Panc1 (cell line): ENCODE measurements at regions of chr2 and their contacts with region 1.

Region 1: DNA sequence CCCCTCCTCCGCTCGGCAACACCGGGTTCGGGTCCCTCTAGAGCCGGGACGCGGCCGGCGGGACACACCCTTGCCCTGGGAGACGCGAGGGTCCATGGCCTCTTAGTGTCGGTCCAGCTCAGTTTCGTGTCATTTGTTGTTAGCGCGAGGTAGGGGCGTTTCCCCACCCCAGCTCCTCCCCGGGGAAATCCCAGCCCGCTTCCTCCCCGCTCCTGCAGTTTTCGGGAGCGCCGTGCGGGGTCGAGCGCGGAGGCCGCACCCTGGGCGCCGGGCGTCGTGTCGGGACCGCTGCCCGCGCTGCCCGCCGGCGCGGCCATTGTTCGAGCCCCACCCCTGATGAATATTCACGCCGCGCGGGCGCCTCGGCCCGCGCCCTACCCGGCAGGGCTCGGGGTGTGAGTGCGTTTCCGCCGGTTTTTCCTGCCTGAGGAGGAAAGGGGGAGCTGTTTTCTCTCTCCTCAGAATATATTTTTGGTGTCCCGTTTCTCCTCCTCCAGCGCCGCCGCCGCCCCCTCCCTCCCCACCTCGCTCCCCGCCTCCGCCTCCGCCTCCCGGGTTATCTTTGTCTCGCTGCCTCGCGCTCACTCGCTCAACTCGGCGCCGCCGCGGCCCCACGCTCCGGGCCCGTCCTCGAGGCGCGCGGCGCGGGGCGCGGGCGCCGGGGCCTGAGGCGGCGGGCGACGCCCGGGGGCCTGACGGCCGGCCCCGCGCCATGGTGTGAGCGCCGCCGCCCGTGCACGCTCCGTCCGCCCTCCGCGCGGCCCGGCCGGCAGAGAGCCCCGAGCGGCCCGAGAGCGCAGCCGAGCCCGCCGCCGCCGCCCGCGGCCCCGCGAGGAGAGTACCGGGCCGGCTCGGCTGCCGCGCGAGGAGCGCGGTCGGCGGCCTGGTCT is at the start of gene MAP4K4:
- DNase-seq: no peak
- ATAC-seq: peak; percentile 84
- H3K4me3 ChIP-seq: peak within 1 kb of the TSS; percentile 81 to 97
- H3K27ac ChIP-seq: peak within 1 kb of the TSS; percentile 89
- H3K4me1 ChIP-seq: peaks cover 3% of the 10 kb centered on the region
- H3K27me3 ChIP-seq: no peaks in the 10 kb centered on the region
- CTCF ChIP-seq: peak; percentile 61
- total RNA-seq, gene MAP4K4: 68.5 TPM

Region 2: DNA sequence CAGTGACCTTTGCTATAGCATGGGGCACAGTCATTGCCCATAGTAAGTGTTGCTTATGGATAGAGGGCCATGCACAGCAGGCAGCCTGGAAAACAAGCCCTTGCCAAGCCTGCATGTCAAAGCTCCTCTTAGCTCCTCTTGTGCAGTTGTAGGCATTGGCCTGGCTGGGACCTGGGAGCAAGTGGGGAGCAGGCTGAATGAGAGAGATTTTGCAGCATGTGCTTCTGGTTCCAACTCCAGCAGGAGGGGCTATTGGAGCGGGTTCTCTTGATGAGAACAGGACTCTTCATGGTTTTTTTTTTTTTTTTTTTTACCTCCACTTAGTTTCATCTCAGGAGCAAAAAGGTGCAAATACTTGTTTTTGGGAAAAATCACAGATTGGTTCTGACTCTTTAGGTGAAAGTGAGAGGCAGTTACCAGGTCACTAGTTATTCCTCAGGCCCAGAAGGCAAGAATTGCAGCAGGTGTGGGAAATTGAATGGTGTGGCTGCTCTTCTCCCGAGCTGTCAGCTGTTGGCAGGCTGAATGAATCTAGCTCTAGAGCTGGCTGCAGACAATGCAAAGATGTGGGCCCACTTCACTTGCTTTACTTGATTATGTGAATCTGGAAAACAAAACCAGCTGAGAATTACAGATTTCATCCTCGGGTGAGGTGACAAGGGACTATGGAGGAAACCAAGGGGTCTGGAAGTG is 96.1 kb after region 1 on chr2:
- CTCF ChIA-PET with region 1: no interaction called
- POLR2A ChIA-PET with region 1: no interaction called
- in situ Hi-C with region 1: no loop called
- intact Hi-C with region 1: no loop called
- DNase-seq: no peak
- ATAC-seq: no peak
- H3K4me3 ChIP-seq: no peak overlapping the region
- H3K27ac ChIP-seq: no peak overlapping the region
- H3K4me1 ChIP-seq: no peaks in the 10 kb centered on the region
- H3K27me3 ChIP-seq: no peaks in the 10 kb centered on the region
- CTCF ChIP-seq: peak; percentile 19; the same call in 1 of the 2 replicates

Region 3: DNA sequence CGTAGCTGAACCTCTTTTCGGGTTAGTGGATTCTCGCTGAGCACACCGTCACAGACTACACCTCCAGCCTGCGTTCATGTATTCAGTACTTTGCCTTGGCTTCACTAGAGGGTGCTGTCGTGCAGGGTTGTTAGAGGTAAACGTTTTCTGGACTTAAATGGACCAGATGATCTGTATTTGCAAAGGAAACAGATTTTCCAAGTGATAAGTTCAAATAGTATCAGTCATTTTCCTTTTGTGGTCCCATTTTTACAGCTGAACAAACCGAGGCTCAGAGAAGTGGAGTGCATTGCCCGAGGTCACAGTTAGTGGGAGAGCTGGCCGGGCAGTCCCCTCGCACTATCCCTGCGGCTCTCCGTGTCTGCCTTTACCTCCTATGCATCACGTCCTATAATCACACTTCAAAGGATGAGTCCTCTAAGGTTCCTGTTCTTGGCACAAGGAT is 126.0 kb after region 1 on chr2:
- CTCF ChIA-PET with region 1: no interaction called
- POLR2A ChIA-PET with region 1: interaction called, 4 read pairs
- in situ Hi-C with region 1: no loop called
- intact Hi-C with region 1: loop called (anchors 10 kb)
- DNase-seq: no peak
- ATAC-seq: peak; percentile 68; the same call in 1 of the 2 replicates
- H3K4me3 ChIP-seq: no peak overlapping the region
- H3K27ac ChIP-seq: no peak overlapping the region
- H3K4me1 ChIP-seq: peaks cover 21% of the 10 kb centered on the region; the same call in 1 of the 2 replicates
- H3K27me3 ChIP-seq: no peaks in the 10 kb centered on the region
- CTCF ChIP-seq: peak; percentile 80

Region 4: DNA sequence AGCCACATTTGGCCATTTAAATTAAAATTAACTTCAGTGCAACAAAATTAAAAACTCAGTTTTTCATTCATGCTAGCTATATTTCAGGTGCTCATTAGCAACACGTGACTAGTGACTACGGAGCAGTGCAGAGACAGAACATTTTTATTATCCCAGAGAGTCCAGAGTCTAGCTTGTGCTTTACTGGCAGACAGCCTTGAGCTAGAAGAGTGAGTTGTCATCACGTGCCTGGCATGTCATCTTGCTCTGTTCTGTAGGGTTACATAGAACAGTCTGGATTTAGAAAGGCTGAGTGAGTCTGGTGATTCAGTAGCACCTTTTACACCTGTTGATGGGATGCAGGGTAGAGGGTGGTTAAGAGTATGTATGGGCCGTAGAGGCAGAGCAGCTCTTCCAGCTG is 157.5 kb after region 1 on chr2:
- CTCF ChIA-PET with region 1: interaction called, 11 read pairs
- POLR2A ChIA-PET with region 1: no interaction called
- in situ Hi-C with region 1: no loop called
- intact Hi-C with region 1: no loop called
- DNase-seq: no peak
- ATAC-seq: no peak
- H3K4me3 ChIP-seq: no peak overlapping the region
- H3K27ac ChIP-seq: no peak overlapping the region
- H3K4me1 ChIP-seq: no peaks in the 10 kb centered on the region
- H3K27me3 ChIP-seq: no peaks in the 10 kb centered on the region
- CTCF ChIP-seq: no peak

Region 5: GRCh38 chr2:101870444-101870843 is 173.1 kb after region 1 on chr2:
- CTCF ChIA-PET with region 1: interaction called, 11 read pairs
- POLR2A ChIA-PET with region 1: no interaction called
- in situ Hi-C with region 1: no loop called
- intact Hi-C with region 1: no loop called
- DNase-seq: no peak
- ATAC-seq: no peak
- H3K4me3 ChIP-seq: no peak overlapping the region
- H3K27ac ChIP-seq: no peak overlapping the region
- H3K4me1 ChIP-seq: no peaks in the 10 kb centered on the region
- H3K27me3 ChIP-seq: no peaks in the 10 kb centered on the region
- CTCF ChIP-seq: no peak

Region 6: GRCh38 chr2:102020596-102021181 is 323.3 kb after region 1 on chr2:
- CTCF ChIA-PET with region 1: no interaction called
- POLR2A ChIA-PET with region 1: no interaction called
- in situ Hi-C with region 1: no loop called
- intact Hi-C with region 1: no loop called
- DNase-seq: peak; percentile 64
- ATAC-seq: peak; percentile 98
- H3K4me3 ChIP-seq: no peak overlapping the region
- H3K27ac ChIP-seq: no peak overlapping the region
- H3K4me1 ChIP-seq: no peaks in the 10 kb centered on the region
- H3K27me3 ChIP-seq: peaks cover 2% of the 10 kb centered on the region; the same call in 1 of the 2 replicates
- CTCF ChIP-seq: peak; percentile 98

Region 7: DNA sequence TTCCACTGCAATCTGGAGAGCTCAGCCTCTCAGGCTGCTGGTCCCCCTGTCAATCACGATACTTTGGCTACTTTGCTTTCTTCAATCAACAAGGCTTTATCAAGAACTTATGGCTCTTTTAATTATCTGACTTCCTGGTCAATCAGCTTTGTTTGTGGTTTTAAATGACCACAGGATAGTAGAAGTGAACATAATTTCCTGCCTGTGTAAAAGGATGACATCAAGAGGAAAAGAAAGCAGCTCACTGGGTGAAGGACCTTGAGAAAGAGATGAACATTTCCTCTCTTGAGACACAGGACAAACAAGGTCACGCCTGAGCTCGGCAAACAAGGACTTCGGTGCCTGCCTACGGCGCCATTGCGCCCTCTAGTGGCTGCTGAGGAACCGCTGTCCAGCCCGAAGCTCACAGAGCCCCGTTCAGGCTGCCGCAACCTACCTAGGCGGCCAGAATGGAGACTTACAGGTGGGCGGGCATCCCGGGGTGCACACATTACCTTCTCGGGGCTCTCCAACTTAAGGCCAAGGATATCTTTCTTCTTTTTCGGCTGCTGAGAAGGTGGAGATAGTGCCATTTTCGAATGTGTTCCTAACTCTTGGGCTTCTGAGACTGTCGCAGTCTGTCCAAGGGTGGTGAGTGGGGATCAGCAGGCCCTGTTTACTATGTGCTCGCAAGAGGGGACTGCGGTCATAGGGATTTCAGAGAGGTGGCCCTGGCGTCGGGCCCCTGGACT is 543.4 kb after region 1 on chr2:
- CTCF ChIA-PET with region 1: no interaction called
- POLR2A ChIA-PET with region 1: no interaction called
- in situ Hi-C with region 1: no loop called
- intact Hi-C with region 1: no loop called
- DNase-seq: peak; percentile 77
- ATAC-seq: peak; percentile 98
- H3K4me3 ChIP-seq: no peak overlapping the region
- H3K27ac ChIP-seq: no peak overlapping the region
- H3K4me1 ChIP-seq: no peaks in the 10 kb centered on the region
- H3K27me3 ChIP-seq: peaks cover 5% of the 10 kb centered on the region
- CTCF ChIP-seq: peak; percentile 98